Esophagus muscularis mucosa (tissue), 4 donors: ENCODE measurements at regions of chr16 and their contacts with region 1.

Region 1: GRCh38 chr16:24471561-24472350 is 67.6 kb upstream of the RBBP6 start:
- DNase-seq: no peak
- H3K4me3 ChIP-seq: no peak overlapping the region
- H3K27ac ChIP-seq: no peak overlapping the region
- H3K4me1 ChIP-seq: no peaks in the 10 kb centered on the region
- H3K27me3 ChIP-seq: peaks cover 0 to 3% (median 0%) of the 10 kb centered on the region in 4 donors
- CTCF ChIP-seq: no peak
- EP300 ChIP-seq: no peak
- POLR2A ChIP-seq: no peak

Region 2: GRCh38 chr16:23889189-23889588 is 582.6 kb before region 1 on chr16:
- intact Hi-C with region 1: loop called (anchors 5 kb)
- DNase-seq: no peak
- H3K4me3 ChIP-seq: no peak overlapping the region
- H3K27ac ChIP-seq: no peak overlapping the region
- H3K4me1 ChIP-seq: no peaks in the 10 kb centered on the region
- H3K27me3 ChIP-seq: no peaks in the 10 kb centered on the region
- CTCF ChIP-seq: no peak
- EP300 ChIP-seq: no peak
- POLR2A ChIP-seq: no peak